Cardiac septum (tissue), 1 donor: ENCODE measurements at regions of chr7 and their contacts with region 1.

Region 1: DNA sequence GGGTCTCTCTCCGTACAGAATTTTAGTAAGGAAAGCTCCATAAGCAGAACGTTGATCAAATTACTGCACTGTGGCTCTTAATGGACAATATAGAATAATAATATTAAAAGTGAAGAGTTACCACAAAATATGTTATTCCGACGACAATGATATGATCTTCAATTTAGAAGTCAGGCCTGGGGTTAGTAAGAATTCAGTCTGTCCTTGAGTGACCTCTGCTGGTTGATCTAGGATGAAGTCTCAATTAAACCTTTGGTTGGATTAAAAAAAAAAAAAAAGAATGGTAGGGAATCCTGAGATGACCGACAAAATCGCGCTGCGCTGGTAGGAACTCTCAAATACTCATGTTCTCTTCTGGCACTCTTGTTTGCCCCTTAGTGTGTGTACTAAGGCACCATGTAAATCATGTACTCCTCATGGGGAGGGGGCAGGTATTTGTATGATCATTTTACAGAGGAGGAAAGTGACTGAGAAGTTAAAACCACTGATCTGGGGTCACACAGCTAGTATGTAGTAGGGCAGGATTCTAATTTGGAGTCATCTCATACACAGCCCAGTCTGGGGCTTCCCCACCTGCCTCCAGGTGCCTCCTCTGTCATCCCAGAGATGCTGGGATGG is 161.3 kb upstream of the NPVF start:
- DNase-seq: no peak

Region 2: DNA sequence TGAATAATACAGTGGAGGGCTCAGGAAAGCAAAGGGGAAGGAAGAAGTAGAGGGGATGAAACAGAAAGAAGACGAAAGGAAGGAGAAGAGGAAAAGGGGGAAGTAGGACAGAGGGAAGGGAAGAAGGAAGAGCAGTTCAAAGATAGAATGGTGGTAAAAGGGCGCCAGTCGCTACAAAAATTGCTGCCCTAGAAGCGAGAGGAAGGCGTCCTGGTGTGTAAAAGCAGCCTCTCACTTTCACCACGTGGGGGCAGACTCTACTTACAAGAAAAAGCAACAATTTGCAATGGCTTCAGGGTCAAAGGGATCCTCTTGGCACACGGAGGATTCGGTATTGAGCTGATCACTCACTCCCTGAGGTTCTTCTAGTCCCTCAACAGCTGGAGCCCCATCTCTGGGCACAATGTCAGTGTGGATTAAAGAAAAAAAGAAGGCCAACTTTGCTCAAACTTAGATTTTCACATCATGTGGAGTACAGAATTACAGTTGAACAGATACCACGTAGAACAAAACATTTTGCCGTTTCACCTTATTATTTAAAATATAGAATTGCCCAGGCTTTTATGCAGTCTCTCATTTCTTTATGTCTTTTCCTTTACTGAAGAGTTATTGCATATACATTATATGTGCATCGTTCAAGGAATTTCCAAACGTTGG is 129.9 kb before region 1 on chr7:
- intact Hi-C with region 1: loop called (anchors 2 kb)
- DNase-seq: no peak

Region 3: GRCh38 chr7:25347360-25348066 is 42.1 kb before region 1 on chr7:
- intact Hi-C with region 1: no loop called
- DNase-seq: no peak

Region 4: GRCh38 chr7:25520017-25520416 is 130.4 kb after region 1 on chr7:
- intact Hi-C with region 1: no loop called
- DNase-seq: no peak